Dendritic cell treated with granulocyte-macrophage colony-stimulating factor and Interleukin-4, amounts not matched to agents 40 ng/mL and 50 ng/mL, for 4 days (primary cell): ENCODE measurements at regions of chr5 and their contacts with region 1.

Region 1: GRCh38 chr5:132495667-132496190 is 5.2 kb upstream of the IRF1 start:
- H3K4me3 Mint-ChIP-seq: peak overlapping the region; percentile 83
- H3K27ac Mint-ChIP-seq: peak overlapping the region; percentile 94
- H3K4me1 Mint-ChIP-seq: peaks cover 70% of the 10 kb centered on the region
- H3K27me3 Mint-ChIP-seq: no peaks in the 10 kb centered on the region

Region 2: DNA sequence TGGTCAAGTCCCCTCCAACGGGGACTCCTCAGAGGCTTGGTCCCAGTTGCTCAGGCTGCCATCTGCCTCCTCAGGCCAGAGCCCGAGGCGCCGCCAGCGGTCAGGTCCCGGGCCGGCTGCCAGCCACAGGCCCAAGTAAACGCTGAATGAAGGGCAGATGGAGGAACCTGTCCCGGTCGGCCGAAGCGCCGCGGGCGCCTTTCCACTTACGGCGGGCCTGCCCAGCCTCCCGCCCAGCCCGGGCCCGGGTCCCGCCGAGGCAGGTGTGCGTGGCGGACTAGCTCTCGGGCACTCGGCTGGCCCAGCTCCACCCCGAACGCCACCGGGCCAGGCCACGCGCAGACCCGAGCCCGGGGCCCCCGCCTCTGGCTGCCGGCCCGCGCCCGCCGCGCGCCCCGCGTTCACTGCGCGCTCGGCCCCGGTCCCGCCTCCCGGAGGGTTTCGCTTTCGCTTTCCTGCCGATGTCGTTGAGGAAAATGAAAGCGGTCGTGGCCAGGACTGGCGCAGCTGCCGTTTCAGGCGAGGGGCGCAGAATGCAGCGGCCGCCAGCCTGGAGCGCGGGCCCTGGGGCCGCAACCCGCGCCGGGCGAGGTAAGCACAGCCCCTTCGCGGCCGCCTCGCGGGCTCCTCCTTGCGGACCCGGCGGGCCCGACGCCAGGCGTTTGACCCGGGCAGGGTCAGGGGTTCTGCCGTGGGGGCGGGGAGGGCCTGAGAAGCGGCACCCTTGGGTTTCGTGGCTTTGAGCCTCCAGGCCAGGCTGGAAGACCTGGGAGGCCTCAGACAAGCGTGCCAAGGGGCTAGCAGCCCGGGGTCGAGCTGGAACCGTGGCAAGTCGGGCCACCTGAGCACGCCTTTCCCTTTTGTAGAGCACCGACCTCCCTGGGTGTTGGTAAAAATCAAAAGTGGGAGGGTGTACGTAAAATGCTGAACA is 85.0 kb before region 1 on chr5:
- intact Hi-C with region 1: loop called (anchors 2 kb)
- H3K4me3 Mint-ChIP-seq: peak overlapping the region; percentile 83
- H3K27ac Mint-ChIP-seq: peak overlapping the region; percentile 94
- H3K4me1 Mint-ChIP-seq: peaks cover 53% of the 10 kb centered on the region
- H3K27me3 Mint-ChIP-seq: no peaks in the 10 kb centered on the region

Region 3: GRCh38 chr5:132419502-132420468 is 75.9 kb before region 1 on chr5:
- intact Hi-C with region 1: loop called (anchors 1 kb)
- H3K4me3 Mint-ChIP-seq: no peak overlapping the region
- H3K27ac Mint-ChIP-seq: peak overlapping the region; percentile 62
- H3K4me1 Mint-ChIP-seq: peaks cover 94% of the 10 kb centered on the region
- H3K27me3 Mint-ChIP-seq: no peaks in the 10 kb centered on the region

Region 4: DNA sequence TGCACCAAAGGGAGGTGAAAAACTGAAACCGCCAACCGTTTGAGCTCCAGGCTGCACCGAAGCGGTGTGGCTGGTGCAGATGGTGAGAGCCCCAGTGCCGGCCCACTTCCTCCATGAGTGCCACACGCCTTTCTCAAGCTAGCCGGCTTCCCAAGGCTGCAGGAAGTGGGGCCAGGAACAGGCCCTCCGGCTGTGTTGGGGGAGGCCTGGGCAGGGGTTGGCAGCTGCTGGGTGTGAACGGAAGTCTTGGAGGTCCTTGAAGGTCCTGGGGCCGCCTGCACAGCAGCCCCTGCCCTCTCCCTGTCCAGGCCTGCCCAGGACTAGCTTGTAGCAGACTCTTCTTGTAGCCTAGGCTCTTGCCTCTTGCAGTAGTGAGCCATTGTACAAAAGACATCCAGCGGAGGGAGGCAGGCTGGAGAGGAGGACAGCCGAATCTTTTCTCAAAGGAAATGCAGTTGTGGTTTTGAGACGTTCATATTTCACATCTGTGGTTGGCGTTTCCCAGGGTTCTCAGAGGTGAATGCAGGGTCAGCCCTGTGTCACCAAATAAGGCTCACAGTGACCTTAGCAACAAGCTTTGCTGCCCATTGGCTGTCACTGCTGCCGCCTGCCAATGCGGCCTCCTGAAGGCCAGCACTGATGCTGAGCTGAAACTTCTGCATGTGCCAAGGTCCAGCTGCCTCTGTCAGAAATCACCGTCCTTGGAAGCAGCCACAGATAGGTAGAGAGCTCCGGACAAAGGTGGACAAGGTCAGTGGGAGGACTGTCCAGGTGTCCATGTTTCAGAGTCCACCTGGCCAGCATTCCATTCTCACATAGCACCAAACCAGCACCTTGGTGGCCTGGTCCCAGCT is 29.1 kb before region 1 on chr5:
- intact Hi-C with region 1: loop called (anchors 5 kb)
- H3K4me3 Mint-ChIP-seq: no peak overlapping the region
- H3K27ac Mint-ChIP-seq: peak overlapping the region; percentile 67
- H3K4me1 Mint-ChIP-seq: peaks cover 83% of the 10 kb centered on the region
- H3K27me3 Mint-ChIP-seq: peaks cover 5% of the 10 kb centered on the region

Region 5: GRCh38 chr5:132510076-132510475 is 14.3 kb after region 1 on chr5:
- intact Hi-C with region 1: no loop called
- H3K4me3 Mint-ChIP-seq: no peak overlapping the region
- H3K27ac Mint-ChIP-seq: no peak overlapping the region
- H3K4me1 Mint-ChIP-seq: peaks cover 26% of the 10 kb centered on the region
- H3K27me3 Mint-ChIP-seq: no peaks in the 10 kb centered on the region